Endothelial cell of umbilical vein (primary cell): ENCODE measurements at regions of chr16 and their contacts with region 1.

Region 1: DNA sequence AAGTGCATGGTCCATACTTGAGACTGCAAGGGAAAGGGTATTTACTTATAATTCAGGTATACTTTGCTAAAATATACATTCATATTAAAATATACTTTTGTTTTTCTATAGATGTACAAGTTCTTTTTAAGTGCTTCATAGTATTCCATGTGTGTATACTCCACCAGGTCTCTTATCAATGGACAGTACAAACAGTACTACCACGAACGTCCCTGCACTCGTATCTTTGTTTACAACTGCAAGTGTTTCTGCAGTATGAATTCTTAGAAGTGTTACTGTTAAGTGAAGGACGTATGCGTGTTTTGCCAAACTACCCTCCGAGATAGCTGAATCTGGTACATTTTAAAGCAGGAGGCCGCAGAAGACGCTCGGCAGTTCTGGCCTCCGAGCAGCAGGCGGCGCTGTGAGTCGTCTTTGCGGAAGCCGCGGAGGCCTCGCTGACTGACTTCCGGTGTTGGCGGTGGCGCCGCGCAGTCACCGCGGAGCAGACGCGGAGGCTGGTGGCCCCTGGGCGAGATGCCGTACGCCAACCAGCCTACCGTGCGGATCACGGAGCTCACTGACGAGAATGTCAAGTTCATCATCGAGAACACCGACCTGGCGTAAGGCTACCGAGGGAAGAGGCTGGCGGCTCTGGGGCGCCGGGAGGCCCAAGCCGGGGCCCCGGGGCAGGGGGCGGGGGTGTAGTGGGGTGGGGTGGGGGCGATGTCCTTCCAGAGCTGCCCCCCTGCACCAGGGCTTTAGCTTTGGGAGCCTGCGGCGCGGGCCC is at the start of gene POLR2C:
- DNase-seq: peak; percentile 87
- H3K4me3 ChIP-seq: peak within 1 kb of the TSS; percentile 59 to 85 (median 79)
- H3K27ac ChIP-seq: peak within 1 kb of the TSS; percentile 38
- H3K4me1 ChIP-seq: peaks cover 6% of the 10 kb centered on the region
- H3K27me3 ChIP-seq: no peaks in the 10 kb centered on the region
- CTCF ChIP-seq: peak; percentile 95 to 96
- POLR2A ChIP-seq: peak; percentile 99
- total RNA-seq, gene POLR2C: 60.2 and 65.2 TPM in 2 replicates

Region 2: GRCh38 chr16:57390636-57391295 is 71.6 kb before region 1 on chr16:
- CTCF ChIA-PET with region 1: no interaction called
- POLR2A ChIA-PET with region 1: no interaction called
- dilution Hi-C with region 1: no loop called
- intact Hi-C with region 1: no loop called
- DNase-seq: peak; percentile 69
- H3K4me3 ChIP-seq: no peak overlapping the region
- H3K27ac ChIP-seq: no peak overlapping the region
- H3K4me1 ChIP-seq: peaks cover 12% of the 10 kb centered on the region
- H3K27me3 ChIP-seq: peaks cover 2 to 4% of the 10 kb centered on the region in 2 experiments
- CTCF ChIP-seq: no peak
- POLR2A ChIP-seq: no peak

Region 3: GRCh38 chr16:57403965-57404817 is 58.2 kb before region 1 on chr16 and contains the start of gene CCL17:
- CTCF ChIA-PET with region 1: no interaction called
- POLR2A ChIA-PET with region 1: no interaction called
- dilution Hi-C with region 1: no loop called
- intact Hi-C with region 1: no loop called
- DNase-seq: no peak
- H3K4me3 ChIP-seq: no peak within 1 kb of the TSS
- H3K27ac ChIP-seq: no peak within 1 kb of the TSS
- H3K4me1 ChIP-seq: peaks cover 5% of the 10 kb centered on the region
- H3K27me3 ChIP-seq: peaks cover 0 to 3% of the 10 kb centered on the region in 2 experiments
- CTCF ChIP-seq: no peak
- POLR2A ChIP-seq: no peak
- total RNA-seq, gene CCL17: not detected in 2 replicates

Region 4: DNA sequence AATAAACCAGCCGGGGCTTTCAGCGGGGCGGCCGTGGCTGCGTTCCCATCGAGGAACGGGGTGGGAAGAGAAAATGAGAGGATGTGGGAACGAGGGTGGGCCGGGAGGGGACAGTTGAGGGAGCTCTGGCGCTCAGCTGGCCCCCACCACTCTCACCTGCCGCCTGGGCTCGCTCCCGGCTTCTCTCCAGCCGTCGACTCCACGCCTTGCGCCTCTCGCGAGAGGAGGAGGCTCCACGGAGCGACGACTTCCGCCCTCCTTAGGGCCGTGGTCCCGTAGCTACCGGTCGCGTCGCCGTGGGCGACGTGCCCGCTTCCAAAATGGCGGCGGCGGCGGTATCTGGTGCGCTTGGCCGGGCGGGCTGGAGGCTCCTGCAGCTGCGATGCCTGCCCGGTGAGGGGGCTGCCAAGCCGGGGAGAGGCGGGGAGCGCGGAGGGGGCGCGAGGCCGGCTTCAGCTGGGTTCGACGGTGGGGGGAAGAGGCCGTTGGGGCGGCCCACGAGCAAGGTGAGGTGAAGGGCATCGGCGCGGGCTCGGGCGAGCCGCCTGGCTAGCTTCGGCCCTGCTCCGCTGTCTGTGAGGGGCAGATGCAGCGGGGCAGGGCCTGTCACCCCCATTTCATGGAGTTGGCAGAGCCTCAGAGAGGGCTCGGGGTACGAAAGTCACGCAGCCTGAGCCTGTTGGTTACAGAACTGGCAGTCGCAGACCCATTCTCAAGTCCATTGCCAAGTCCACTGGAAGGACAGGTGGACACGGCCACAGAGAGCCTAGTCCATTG is 15.0 kb before region 1 on chr16 and contains the starts of genes CIAPIN1 and COQ9:
- CTCF ChIA-PET with region 1: interaction called, 26 read pairs
- POLR2A ChIA-PET with region 1: interaction called, 4 read pairs
- dilution Hi-C with region 1: no loop called
- intact Hi-C with region 1: loop called (anchors 1 kb)
- DNase-seq: peak; percentile 92
- H3K4me3 ChIP-seq: peak within 1 kb of the TSS; percentile 43 to 93 (median 78)
- H3K27ac ChIP-seq: peak within 1 kb of the TSS; percentile 56
- H3K4me1 ChIP-seq: peaks cover 12% of the 10 kb centered on the region
- H3K27me3 ChIP-seq: no peaks in the 10 kb centered on the region
- CTCF ChIP-seq: no peak
- POLR2A ChIP-seq: peak; percentile 94
- total RNA-seq, gene CIAPIN1: 70.9 and 77.9 TPM in 2 replicates
- total RNA-seq, gene COQ9: 42.1 and 42.5 TPM in 2 replicates

Region 5: GRCh38 chr16:57475711-57476339 is 13.4 kb after region 1 on chr16:
- CTCF ChIA-PET with region 1: interaction called, 25 read pairs
- POLR2A ChIA-PET with region 1: no interaction called
- dilution Hi-C with region 1: no loop called
- intact Hi-C with region 1: no loop called
- DNase-seq: peak; percentile 56
- H3K4me3 ChIP-seq: no peak overlapping the region
- H3K27ac ChIP-seq: no peak overlapping the region
- H3K4me1 ChIP-seq: peaks cover 28% of the 10 kb centered on the region
- H3K27me3 ChIP-seq: no peaks in the 10 kb centered on the region
- CTCF ChIP-seq: peak; percentile 79 to 84
- POLR2A ChIP-seq: no peak

Region 6: DNA sequence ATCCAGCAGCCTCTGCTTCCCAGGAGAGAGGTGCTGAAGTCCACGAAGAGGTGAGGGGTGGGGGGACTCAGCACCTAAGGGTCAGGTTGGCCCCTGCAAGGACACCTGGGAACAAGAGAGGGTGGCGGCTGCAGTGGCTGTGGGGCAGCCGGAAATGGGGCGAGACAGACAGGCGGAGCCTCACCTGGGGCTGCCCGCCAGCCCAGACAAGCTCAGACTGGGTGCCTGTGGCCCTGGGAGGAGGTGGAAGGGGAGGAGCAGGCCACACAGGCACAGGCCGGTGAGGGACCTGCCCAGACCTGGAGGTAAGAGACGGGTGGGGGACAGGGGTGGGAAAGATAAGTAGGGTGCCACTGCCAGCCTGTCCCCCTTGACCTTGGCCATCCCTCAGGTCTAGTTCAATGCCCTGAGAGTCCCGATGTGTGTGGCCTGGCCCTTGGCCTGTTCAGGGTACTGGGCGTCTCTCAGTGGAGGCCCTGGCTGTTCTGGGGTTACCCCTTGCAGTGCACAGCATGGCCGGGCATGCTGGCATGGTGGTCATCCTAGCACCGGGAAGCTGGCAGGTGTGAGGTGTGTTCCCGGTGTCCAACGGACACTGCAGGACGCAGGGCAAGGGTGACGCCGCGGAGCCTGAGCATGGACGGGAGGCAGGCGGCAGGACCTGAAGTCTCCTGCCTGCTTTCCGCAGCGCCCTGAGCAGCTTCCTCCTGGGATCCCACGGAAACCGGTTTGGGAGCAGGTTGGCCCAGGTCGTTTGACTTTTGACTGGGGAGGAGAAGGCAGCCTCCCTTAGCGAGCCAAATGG is 157.6 kb after region 1 on chr16:
- CTCF ChIA-PET with region 1: no interaction called
- POLR2A ChIA-PET with region 1: no interaction called
- dilution Hi-C with region 1: no loop called
- intact Hi-C with region 1: no loop called
- DNase-seq: no peak
- H3K4me3 ChIP-seq: no peak overlapping the region
- H3K27ac ChIP-seq: no peak overlapping the region
- H3K4me1 ChIP-seq: no peaks in the 10 kb centered on the region
- H3K27me3 ChIP-seq: no peaks in the 10 kb centered on the region
- CTCF ChIP-seq: no peak
- POLR2A ChIP-seq: no peak